HAP-1 (cell line): ENCODE measurements at regions of chr10 and their contacts with region 1.

Region 1: DNA sequence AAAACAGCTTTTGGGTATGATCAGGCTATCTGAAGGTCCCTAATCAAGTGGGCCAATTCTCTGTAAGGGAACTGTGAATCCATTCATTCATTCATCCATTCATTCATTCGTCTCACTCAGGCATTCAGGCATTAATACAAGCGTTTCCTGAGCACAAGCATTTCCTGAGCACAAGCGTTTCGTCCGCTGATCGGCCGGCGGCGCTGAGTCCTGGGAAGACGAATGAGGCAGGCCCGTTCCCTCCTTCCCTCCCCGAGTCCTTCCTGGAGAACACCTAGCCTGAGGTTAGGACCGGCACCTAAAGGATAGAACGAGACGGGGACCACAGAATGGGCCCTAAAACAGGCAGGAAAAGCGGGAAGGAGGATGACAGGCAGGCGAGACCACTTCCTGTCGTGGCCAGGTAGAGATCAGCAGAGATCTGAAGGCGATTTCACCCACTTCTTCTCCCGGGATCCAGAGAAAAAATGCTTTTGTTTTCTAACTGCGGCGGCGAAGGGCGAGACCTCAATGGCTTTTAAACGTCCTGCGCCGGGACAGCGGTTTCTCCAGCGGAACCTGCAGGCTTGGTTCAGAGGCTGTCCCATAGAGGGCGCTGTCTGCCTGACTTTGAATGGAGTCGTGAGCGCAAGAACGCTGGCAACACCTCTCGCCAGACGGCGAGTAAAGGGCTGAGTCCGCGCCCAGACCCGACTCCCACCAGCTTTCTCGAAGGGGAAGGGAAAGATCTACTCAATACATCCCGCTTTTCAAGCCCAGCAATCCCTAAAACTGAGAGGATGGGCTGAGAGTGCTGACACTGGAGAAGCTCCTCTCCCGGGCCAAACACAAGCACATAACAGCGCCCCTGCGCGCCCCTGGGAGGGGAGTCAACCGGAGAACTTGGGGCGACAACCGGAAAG is 2.9 kb upstream of the HMX3 start:
- DNase-seq: peak; percentile 87 to 93
- H3K4me3 ChIP-seq: peak overlapping the region; percentile 13
- H3K4me1 ChIP-seq: peaks cover 11% of the 10 kb centered on the region; the same call in 1 of the 2 replicates
- H3K27me3 ChIP-seq: no peaks in the 10 kb centered on the region

Region 2: GRCh38 chr10:122999347-122999746 is 133.5 kb before region 1 on chr10:
- in situ Hi-C with region 1: no loop called
- DNase-seq: peak in 1 of 2 experiments; percentile 15
- H3K4me3 ChIP-seq: no peak overlapping the region
- H3K4me1 ChIP-seq: peaks cover 15% of the 10 kb centered on the region
- H3K27me3 ChIP-seq: no peaks in the 10 kb centered on the region

Region 3: DNA sequence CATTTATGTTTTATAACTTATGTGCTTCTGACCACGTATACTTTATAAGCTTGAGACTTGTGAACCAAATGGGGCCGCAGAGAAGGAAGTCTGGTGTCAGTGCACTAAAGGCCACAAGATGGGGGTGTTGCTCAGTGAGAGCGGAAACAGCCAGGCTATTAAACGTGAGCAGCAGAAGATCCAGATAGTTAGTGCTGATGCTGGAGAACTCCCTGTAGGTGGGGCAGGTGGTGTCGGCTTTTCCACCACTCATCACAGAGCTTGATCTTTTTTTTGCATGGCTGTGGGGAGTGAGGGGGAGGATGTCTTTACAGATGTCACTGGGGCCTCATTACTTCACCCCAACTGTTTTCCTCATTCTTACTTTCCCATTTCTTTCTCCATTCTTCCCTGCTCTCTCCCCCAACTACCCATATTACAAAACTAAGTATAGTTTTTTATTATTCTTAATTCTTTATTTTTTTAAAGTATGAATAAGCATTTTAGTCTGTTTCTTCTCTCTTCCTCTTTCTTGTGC is 89.4 kb before region 1 on chr10:
- in situ Hi-C with region 1: loop called (anchors 10 kb)
- DNase-seq: peak; percentile 55 to 67
- H3K4me3 ChIP-seq: no peak overlapping the region
- H3K4me1 ChIP-seq: no peaks in the 10 kb centered on the region
- H3K27me3 ChIP-seq: no peaks in the 10 kb centered on the region

Region 4: GRCh38 chr10:123552760-123553554 is 420.1 kb after region 1 on chr10:
- in situ Hi-C with region 1: loop called (anchors 5 kb)
- DNase-seq: no peak
- H3K4me3 ChIP-seq: no peak overlapping the region
- H3K4me1 ChIP-seq: no peaks in the 10 kb centered on the region
- H3K27me3 ChIP-seq: no peaks in the 10 kb centered on the region

Region 5: DNA sequence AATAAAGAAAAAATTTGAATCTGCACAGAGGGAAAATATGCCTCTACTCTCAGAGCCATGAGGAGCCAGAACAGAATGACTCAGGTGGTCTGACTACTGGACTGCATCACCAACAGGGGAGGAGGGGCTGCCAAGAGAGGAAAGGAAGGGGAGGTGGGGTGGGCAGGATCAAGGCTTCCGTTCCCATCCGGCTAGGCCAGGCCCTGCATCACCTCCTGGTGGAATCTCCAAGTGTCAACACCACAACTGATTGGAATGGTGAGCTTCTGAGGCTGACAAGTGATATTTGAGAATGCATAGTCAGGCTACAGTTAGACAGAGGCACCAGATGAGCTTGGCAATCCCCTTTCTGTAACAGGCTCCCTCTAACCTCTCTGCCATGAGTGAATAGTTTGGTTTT is 522.9 kb after region 1 on chr10:
- in situ Hi-C with region 1: no loop called
- DNase-seq: no peak
- H3K4me3 ChIP-seq: no peak overlapping the region
- H3K4me1 ChIP-seq: no peaks in the 10 kb centered on the region
- H3K27me3 ChIP-seq: no peaks in the 10 kb centered on the region